Adrenal gland (tissue), 19 donors: ENCODE measurements at regions of chr10 and their contacts with region 1.

Region 1: DNA sequence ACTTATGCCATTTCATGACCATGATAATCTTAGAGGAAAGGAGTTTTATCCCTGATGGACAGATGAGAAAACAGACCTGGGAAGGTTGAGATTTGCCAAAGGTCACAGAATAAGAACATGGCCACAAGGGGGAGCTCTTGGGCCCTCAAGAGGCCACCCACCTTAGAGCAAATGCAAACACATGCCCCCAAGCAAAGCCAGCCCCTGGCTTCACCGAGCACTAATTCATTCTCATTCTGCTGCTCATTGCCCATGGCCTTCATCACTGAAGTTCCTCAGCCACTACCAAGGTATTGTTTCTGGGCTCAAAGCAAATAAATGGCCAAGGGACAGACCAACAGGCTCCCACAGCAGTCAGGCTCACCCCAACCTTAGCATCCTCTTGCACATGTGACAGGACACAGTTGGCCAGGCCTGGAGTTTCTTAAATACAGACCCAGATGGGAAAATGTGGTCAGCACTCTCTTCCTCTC is 44.2 kb downstream of the PDLIM1 start:
- DNase-seq: peak; percentile 61 to 87 (median 78)
- H3K4me3 ChIP-seq: no peak overlapping the region
- H3K27ac ChIP-seq: peak overlapping the region in 2 of 5 donors; percentile 14 to 31
- H3K4me1 ChIP-seq: no peaks in the 10 kb centered on the region
- H3K27me3 ChIP-seq: no peaks in the 10 kb centered on the region
- CTCF ChIP-seq: peak; percentile 67 to 89 (median 76)
- POLR2A ChIP-seq: no peak

Region 2: GRCh38 chr10:94997741-94998174 is 248.9 kb before region 1 on chr10:
- intact Hi-C with region 1: no loop called
- DNase-seq: no peak
- H3K4me3 ChIP-seq: no peak overlapping the region
- H3K27ac ChIP-seq: no peak overlapping the region
- H3K4me1 ChIP-seq: no peaks in the 10 kb centered on the region
- H3K27me3 ChIP-seq: no peaks in the 10 kb centered on the region
- CTCF ChIP-seq: no peak
- POLR2A ChIP-seq: no peak

Region 3: GRCh38 chr10:95133016-95133752 is 113.4 kb before region 1 on chr10:
- intact Hi-C with region 1: loop called (anchors 5 to 10 kb)
- DNase-seq: peak; percentile 64 to 91 (median 82)
- H3K4me3 ChIP-seq: no peak overlapping the region
- H3K27ac ChIP-seq: no peak overlapping the region
- H3K4me1 ChIP-seq: no peaks in the 10 kb centered on the region
- H3K27me3 ChIP-seq: no peaks in the 10 kb centered on the region
- CTCF ChIP-seq: peak; percentile 45 to 81 (median 71)
- POLR2A ChIP-seq: no peak

Region 4: DNA sequence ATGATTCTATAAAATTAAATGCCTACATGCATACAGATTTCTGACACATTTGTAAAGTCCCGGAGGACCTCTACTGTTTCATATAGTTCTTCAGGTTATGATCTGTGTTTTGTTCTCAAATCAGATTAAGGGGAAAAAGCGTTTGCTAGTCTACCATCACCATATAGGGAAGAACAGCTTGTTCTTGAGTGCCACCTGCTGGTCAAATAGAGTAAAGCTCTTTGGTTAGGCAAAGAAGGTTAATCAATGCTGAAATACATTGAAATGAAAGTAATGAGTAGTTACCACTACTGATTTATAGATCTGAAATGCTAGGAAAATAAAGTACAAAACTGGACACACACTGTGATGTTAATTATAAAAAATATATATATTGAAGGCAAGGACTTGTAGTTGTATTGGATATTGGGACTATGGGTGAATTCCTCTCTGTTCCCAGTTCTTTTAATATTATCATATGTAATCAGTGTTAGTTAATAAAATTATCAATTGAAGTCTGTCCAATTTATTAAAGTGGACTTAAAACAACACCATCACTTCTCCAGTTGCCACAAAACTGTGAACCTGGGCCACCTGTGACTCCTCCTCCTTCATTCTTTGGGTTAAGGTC is 116.8 kb after region 1 on chr10:
- intact Hi-C with region 1: loop called (anchors 2 to 5 kb)
- DNase-seq: peak in 6 of 7 donors; percentile 40 to 71 (median 62)
- H3K4me3 ChIP-seq: no peak overlapping the region
- H3K27ac ChIP-seq: no peak overlapping the region
- H3K4me1 ChIP-seq: peaks cover 0 to 4% of the 10 kb centered on the region in 2 donors
- H3K27me3 ChIP-seq: no peaks in the 10 kb centered on the region
- CTCF ChIP-seq: peak; percentile 82 to 94 (median 88)
- POLR2A ChIP-seq: no peak